Activated naive CD4-positive, alpha-beta T cell treated with anti-CD3 and anti-CD28 coated beads for 36 hours (primary cell): ENCODE measurements at regions of chr20 and their contacts with region 1.

Region 1: DNA sequence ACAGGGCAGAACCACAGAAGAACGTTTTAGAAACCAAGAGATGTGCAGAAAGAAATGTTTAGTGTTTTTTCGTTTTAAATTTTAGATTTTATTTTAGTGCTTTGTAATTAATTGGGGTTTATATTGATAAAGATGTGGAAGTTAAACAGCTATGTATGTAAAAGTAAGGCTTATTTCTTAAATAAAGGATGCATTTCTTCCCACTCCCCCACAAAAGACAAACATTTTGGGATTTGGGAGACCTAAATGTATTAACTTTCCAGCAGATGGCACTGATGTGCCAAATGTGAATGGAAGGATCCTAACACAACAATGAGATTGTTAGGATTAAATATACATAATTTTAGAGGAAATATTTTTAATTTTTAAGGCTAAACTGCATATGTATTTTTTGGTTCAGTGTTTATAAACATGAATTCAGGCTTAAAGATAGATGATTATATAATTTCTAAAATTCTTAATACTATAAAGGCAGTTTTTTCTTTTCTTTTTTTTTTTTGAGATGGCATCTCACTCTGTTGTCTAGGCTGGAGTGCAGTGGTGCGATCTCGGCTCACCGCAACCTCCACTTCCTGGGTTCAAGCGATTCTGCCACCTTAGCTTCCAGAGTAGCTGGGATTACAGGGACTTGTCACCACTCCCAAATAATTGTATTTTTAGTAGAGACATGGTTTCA is 12.0 kb downstream of the PFDN4 start:
- DNase-seq: peak; percentile 33
- H3K4me3 Mint-ChIP-seq: no peak overlapping the region
- H3K27ac Mint-ChIP-seq: peak overlapping the region; percentile 85
- H3K4me1 Mint-ChIP-seq: peaks cover 40% of the 10 kb centered on the region
- H3K27me3 Mint-ChIP-seq: no peaks in the 10 kb centered on the region

Region 2: DNA sequence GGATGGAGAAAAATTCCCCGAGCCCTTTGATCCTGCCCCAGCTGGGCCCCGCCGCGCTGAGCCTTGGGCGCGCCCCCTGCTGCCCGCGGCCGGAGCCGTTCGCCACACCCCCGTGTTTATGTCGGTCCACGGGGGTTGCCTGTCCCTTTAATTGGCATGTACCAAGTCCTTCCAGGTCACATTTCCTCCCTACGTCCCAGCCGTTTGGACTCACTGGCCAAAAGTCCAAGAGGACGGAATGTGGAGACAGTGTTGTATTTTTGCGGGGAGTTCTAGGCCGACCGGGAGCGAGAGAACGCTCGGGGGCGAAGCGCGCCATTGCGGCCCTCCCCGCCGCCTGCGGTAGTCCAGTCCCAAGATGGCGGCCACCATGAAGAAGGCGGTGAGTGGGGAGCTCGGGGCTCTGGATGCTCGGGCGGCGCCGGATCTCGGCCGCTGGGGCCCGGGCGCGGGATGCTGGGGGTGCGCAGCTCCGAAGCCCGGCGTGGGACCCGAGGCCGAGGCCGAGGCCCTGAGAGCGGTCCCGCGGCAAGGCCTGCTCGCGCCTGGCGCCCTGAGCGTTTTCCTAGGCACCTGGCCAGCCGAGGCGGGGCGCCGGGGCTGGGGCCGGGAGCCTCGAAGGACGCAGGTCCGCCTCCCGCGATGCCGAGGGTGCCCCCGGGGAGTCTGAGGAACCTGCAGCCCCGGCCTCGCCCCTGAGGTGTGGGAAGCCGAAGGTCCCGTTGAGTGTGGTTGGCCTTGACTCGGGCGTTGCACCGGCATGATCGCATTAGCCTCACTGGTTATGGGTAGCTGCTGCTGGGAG is 11.9 kb before region 1 on chr20 and contains the start of gene PFDN4:
- CTCF ChIA-PET with region 1: interaction called, 8 read pairs
- intact Hi-C with region 1: loop called (anchors 1 kb)
- DNase-seq: peak; percentile 86
- H3K4me3 Mint-ChIP-seq: peak within 1 kb of the TSS; percentile 90
- H3K27ac Mint-ChIP-seq: peak within 1 kb of the TSS; percentile 98
- H3K4me1 Mint-ChIP-seq: peaks cover 42% of the 10 kb centered on the region
- H3K27me3 Mint-ChIP-seq: no peaks in the 10 kb centered on the region
- total RNA-seq, gene PFDN4: 48.8 to 53.3 TPM

Region 3: GRCh38 chr20:54475334-54476168 is 255.7 kb after region 1 on chr20 and contains the start of gene DOK5:
- CTCF ChIA-PET with region 1: no interaction called
- intact Hi-C with region 1: loop called (anchors 5 kb)
- DNase-seq: no peak
- H3K4me3 Mint-ChIP-seq: peak within 1 kb of the TSS; percentile 62
- H3K27ac Mint-ChIP-seq: no peak within 1 kb of the TSS
- H3K4me1 Mint-ChIP-seq: peaks cover 24% of the 10 kb centered on the region
- H3K27me3 Mint-ChIP-seq: peaks cover 54% of the 10 kb centered on the region
- total RNA-seq, gene DOK5: 3.9 to 4.3 TPM